MCF 10A (cell line): ENCODE measurements at regions of chr1 and their contacts with region 1.

Region 1: GRCh38 chr1:85628791-85629531 is 48.4 kb downstream of the CCN1 start:
- DNase-seq: peak; percentile 68
- H3K4me3 Mint-ChIP-seq: peak overlapping the region; percentile 24
- H3K27ac Mint-ChIP-seq: peak overlapping the region; percentile 91
- H3K4me1 Mint-ChIP-seq: peaks cover 12% of the 10 kb centered on the region
- H3K27me3 Mint-ChIP-seq: no peaks in the 10 kb centered on the region
- CTCF ChIP-seq: no peak

Region 2: GRCh38 chr1:85612704-85613361 is 16.1 kb before region 1 on chr1:
- CTCF ChIA-PET with region 1: interaction called, 6 read pairs
- POLR2A ChIA-PET with region 1: interaction called, 16 read pairs
- intact Hi-C with region 1: no loop called
- DNase-seq: peak; percentile 59
- H3K4me3 Mint-ChIP-seq: no peak overlapping the region
- H3K27ac Mint-ChIP-seq: peak overlapping the region; percentile 68
- H3K4me1 Mint-ChIP-seq: peaks cover 30% of the 10 kb centered on the region
- H3K27me3 Mint-ChIP-seq: no peaks in the 10 kb centered on the region
- CTCF ChIP-seq: peak; percentile 38